GM12878 (cell line): ENCODE measurements at regions of chr14 and their contacts with region 1.

Region 1: DNA sequence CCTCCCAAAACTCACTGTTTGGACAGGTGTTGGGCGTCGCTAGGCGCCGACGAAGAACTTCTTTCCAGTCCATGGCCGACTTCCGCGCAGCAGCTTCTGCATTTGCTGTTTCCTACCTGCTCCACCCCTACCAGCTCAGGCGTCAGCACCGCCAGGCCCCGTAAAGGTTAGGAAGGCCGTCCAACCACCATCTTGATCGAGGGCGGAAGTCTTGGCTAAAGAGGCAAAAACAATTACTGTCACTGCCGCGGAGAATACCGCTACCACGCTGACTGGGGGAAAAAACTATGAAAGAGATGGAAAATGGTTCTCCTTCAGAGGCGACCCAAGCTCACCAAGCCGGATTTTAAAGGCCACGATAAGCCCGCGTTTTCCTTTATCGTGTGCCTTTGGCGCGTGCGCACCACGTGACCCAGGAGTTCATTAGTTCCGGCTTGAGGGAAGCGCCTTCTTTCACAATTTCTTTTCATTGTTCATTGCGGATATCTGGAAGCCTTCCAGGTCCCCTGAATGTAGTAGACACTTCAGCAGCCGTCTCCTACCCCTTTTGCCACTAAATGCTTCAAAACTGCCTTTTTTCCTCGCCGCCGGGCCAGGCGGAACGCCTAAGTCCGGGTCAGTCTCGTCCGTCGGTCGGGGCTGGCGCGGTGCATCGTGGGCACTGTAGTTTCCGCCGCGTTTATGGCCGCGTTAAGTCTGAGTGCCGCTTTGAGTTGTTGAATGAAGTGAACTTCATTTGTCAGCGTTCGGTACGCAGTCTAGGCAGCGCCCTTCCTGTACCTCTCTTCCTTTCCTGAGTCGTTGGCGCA is at the starts of genes PPP2R3C and PRORP:
- DNase-seq: peak; percentile 94
- ATAC-seq: peak; percentile 92
- H3K4me3 ChIP-seq: peak within 1 kb of the TSS; percentile 83
- H3K27ac ChIP-seq: peak within 1 kb of the TSS; percentile 99
- H3K4me1 ChIP-seq: 0 out of 2 replicates have a peak, but pooled peaks cover 2% of the 10 kb centered on the region
- H3K27me3 ChIP-seq: no peaks in the 10 kb centered on the region
- CTCF ChIP-seq: no peak
- EP300 ChIP-seq: no peak; a peak in 1 of 4 replicates
- POLR2A ChIP-seq: peak; percentile 75
- RAD21 ChIP-seq: no peak
- polyA plus RNA-seq, gene PPP2R3C: 77.8 to 80.5 TPM
- polyA plus RNA-seq, gene PRORP: 45.2 TPM

Region 2: DNA sequence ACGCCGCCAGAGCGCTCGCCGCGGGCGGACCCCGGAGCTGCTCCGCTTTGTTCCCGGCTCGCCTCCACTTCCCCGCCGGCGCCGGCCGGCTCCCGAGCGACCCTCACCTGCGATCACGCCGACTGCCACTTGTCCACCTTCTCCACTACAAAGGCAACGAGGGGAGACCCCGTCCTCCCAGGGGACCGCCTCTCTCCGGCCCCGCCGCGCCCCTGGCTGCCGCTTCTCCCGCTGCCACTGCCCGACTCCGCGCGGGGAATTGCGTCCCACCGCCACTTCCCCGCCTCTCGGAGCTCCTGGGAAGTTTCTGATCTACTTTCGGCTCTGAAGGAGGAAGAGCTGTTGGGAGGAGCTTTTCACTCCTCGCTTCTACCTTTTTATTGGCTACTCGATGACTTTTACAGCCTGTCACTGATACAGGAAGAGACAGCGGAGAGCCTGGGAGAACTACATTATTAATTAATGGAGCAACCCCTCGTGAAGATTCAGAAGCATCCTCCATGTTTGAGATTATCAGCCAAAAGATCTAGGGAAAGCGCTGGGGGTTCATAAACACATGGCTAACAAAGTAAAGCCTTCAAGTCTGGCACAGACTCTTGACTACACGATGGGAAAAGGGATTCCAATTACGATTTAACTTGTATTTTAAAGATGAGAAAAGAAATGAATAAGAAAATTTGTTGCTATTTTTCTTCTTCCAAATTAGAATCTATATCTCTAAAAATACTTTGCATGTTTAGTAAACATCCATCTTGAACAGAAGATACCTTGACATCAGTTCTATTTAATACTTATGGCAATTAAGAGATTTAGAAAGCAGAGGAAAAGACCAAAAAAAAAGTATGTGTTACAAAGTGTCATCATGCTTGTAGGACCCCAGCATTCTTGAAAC is 246.8 kb before region 1 on chr14 and contains the start of gene BAZ1A:
- CTCF ChIA-PET with region 1: no interaction called
- POLR2A ChIA-PET with region 1: interaction called, 4 read pairs
- RAD21 ChIA-PET with region 1: no interaction called
- SMC1A ChIA-PET with region 1: no interaction called
- in situ Hi-C with region 1: no loop called
- intact Hi-C with region 1: loop called (anchors 5 kb)
- DNase-seq: peak; percentile 41
- ATAC-seq: peak; percentile 39
- H3K4me3 ChIP-seq: peak within 1 kb of the TSS; percentile 88
- H3K27ac ChIP-seq: peak within 1 kb of the TSS; percentile 98
- H3K4me1 ChIP-seq: no peaks in the 10 kb centered on the region; the same call in 1 of the 2 replicates
- H3K27me3 ChIP-seq: no peaks in the 10 kb centered on the region
- CTCF ChIP-seq: no peak
- EP300 ChIP-seq: no peak
- POLR2A ChIP-seq: peak; percentile 47
- RAD21 ChIP-seq: no peak
- polyA plus RNA-seq, gene BAZ1A: 38.5 to 39.9 TPM

Region 3: DNA sequence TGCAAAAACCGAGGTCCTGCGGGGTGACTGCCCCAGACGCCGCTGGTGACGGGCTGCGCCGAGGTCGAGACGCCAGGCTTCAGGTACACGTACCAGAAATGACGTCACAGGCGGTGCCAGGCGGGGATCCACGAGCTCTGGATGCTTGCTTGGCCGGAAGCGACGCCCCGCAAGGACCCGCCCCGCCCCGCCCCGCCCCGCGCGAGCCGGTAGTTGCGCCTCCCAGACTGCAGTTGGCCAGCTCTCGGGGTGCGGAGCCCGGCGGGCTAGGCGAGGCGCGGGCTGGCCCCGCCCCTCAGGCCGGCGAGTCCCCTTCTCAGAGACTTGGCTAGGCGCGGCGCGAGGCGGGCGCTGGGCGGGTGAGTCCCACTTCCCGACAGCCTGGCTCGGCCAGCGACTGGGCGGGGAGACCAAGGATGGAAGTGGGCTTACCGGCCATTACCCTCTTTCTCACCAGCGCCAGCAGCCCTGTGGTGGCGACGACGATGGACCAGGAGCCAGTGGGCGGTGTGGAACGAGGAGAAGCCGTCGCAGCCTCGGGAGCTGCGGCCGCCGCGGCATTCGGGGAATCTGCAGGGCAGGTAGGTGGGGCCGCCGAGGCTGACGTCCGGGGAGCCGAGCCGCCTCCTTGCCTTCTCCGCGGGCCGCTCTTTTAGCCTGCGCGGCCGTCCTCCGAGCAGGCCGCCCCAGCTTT is 75.9 kb before region 1 on chr14 and contains the start of gene FAM177A1:
- CTCF ChIA-PET with region 1: no interaction called
- POLR2A ChIA-PET with region 1: interaction called, 20 read pairs
- RAD21 ChIA-PET with region 1: interaction called, 5 read pairs
- SMC1A ChIA-PET with region 1: interaction called, 6 read pairs
- in situ Hi-C with region 1: no loop called
- intact Hi-C with region 1: loop called (anchors 1 kb)
- DNase-seq: peak; percentile 78
- ATAC-seq: peak; percentile 98
- H3K4me3 ChIP-seq: peak within 1 kb of the TSS; percentile 87
- H3K27ac ChIP-seq: peak within 1 kb of the TSS; percentile 67
- H3K4me1 ChIP-seq: peaks cover 6% of the 10 kb centered on the region; the same call in 1 of the 2 replicates
- H3K27me3 ChIP-seq: no peaks in the 10 kb centered on the region
- CTCF ChIP-seq: no peak
- EP300 ChIP-seq: no peak
- POLR2A ChIP-seq: peak; percentile 95
- RAD21 ChIP-seq: no peak
- polyA plus RNA-seq, gene FAM177A1: 5.3 to 11.0 TPM

Region 4: DNA sequence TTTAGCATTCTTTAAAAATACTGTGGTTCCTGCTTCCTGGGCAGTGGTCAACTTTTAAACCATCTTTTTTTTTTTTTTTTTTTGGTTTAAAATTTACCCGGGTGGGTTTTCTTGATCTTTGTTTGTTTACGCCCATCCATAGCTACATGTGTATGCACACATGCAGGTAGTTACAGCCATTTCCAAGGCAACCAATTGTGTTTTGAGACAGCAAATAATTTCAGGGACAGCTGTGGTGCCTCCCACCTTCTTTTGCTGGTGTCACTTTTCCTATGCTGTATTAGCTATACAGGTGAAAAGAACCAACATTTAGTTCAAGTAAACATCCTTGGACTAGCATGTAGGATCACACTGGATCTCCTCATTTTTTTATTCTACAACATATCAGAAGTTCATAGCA is 118.1 kb after region 1 on chr14:
- CTCF ChIA-PET with region 1: no interaction called
- POLR2A ChIA-PET with region 1: interaction called, 11 read pairs
- RAD21 ChIA-PET with region 1: no interaction called
- SMC1A ChIA-PET with region 1: no interaction called
- in situ Hi-C with region 1: no loop called
- intact Hi-C with region 1: no loop called
- DNase-seq: no peak
- ATAC-seq: no peak
- H3K4me3 ChIP-seq: no peak overlapping the region
- H3K27ac ChIP-seq: no peak overlapping the region
- H3K4me1 ChIP-seq: peaks cover 8% of the 10 kb centered on the region; the same call in 1 of the 2 replicates
- H3K27me3 ChIP-seq: no peaks in the 10 kb centered on the region
- CTCF ChIP-seq: no peak
- EP300 ChIP-seq: no peak
- POLR2A ChIP-seq: no peak
- RAD21 ChIP-seq: no peak